ENCODE measurements at regions of chr1 and their contacts with region 1.

Region 1: GRCh38 chr1:112614460-112615065 is 4.4 kb downstream of the ST7L start:
- DNase-seq: no peak
- ATAC-seq: no peak
- H3K4me3 ChIP-seq: no peak overlapping the region
- H3K27ac ChIP-seq: no peak overlapping the region
- H3K4me1 ChIP-seq: peaks cover 10% of the 10 kb centered on the region
- H3K27me3 ChIP-seq: no peaks in the 10 kb centered on the region; a peak in 1 of 5 replicates
- CTCF ChIP-seq: peak; percentile 53
- EP300 ChIP-seq: no peak
- POLR2A ChIP-seq: no peak
- RAD21 ChIP-seq: no peak

Region 2: GRCh38 chr1:112390775-112391602 is 223.6 kb before region 1 on chr1:
- CTCF ChIA-PET with region 1: interaction called, 5 read pairs
- POLR2A ChIA-PET with region 1: interaction called, 3 read pairs
- in situ Hi-C with region 1: loop called (anchors 5 kb)
- intact Hi-C with region 1: loop called (anchors 1 kb)
- DNase-seq: peak; percentile 88
- ATAC-seq: peak; percentile 76
- H3K4me3 ChIP-seq: peak overlapping the region; percentile 48 to 74 (median 56)
- H3K27ac ChIP-seq: no peak overlapping the region
- H3K4me1 ChIP-seq: peaks cover 71% of the 10 kb centered on the region
- H3K27me3 ChIP-seq: no peaks in the 10 kb centered on the region
- CTCF ChIP-seq: peak; percentile 95
- EP300 ChIP-seq: no peak
- POLR2A ChIP-seq: no peak
- RAD21 ChIP-seq: peak; percentile 87

Region 3: GRCh38 chr1:112544011-112544688 is 70.4 kb before region 1 on chr1:
- CTCF ChIA-PET with region 1: no interaction called
- POLR2A ChIA-PET with region 1: no interaction called
- in situ Hi-C with region 1: no loop called
- intact Hi-C with region 1: no loop called
- DNase-seq: peak; percentile 41
- ATAC-seq: no peak
- H3K4me3 ChIP-seq: no peak overlapping the region
- H3K27ac ChIP-seq: no peak overlapping the region
- H3K4me1 ChIP-seq: no peaks in the 10 kb centered on the region
- H3K27me3 ChIP-seq: no peaks in the 10 kb centered on the region
- CTCF ChIP-seq: no peak
- EP300 ChIP-seq: no peak
- POLR2A ChIP-seq: no peak
- RAD21 ChIP-seq: no peak

Measured in HepG2 (cell line).